CD8-positive, alpha-beta memory T cell (primary cell): ENCODE measurements at regions of chr3 and their contacts with region 1.

Region 1: DNA sequence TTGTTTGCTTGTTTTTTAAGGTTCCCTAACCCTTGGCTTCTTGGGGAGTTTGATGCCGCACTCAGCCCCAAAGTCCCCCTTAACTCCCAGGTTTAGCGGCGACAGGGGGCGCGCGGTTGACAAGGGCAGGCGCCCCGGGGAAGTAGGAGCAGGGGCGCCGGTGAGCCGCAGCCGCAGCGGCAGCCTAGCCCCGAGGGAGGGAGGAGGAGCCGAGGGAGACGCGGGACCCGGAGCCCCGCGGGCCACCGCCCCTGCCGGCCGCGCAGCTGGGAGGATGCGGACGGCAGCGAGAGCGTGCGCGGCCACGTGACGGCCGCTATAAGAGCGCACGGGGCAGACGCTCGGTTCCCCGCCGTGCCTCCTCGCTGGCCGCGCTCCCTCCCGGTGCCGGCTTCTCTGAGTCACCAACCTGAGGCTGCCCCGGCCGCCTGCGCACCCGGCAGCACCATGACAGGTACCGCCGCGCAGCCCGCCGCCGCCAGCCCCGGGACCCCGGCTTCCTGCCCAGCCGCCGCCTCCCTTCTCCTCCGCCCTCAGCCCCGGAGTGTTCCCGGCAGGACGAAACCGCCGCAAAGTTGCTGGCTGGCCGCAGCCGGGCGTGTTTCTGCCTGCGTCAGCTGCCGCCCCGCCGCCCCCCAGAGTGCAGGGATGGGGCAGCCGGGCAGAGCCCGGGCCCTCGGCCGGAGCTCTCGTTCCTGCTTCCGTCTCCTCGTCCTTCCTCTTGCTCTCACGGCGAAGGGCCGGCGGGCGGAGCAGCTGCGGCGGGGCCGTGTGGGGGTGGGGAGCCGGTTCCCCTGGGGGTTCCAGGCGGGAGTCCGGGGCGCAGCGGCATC is at the start of gene GYG1:
- DNase-seq: peak; percentile 73 to 88 (median 78)
- H3K4me3 ChIP-seq: peak within 1 kb of the TSS; percentile 53
- H3K4me3 Mint-ChIP-seq: peak within 1 kb of the TSS; percentile 82 to 90 (median 86)
- H3K27ac ChIP-seq: peak within 1 kb of the TSS; percentile 68
- H3K27ac Mint-ChIP-seq: peak within 1 kb of the TSS; percentile 87 to 97 (median 93)
- H3K4me1 ChIP-seq: peaks cover 26% of the 10 kb centered on the region
- H3K4me1 Mint-ChIP-seq: peaks cover 43 to 52% (median 48%) of the 10 kb centered on the region in 3 donors
- H3K27me3 ChIP-seq: no peaks in the 10 kb centered on the region
- H3K27me3 Mint-ChIP-seq: no peaks in the 10 kb centered on the region
- total RNA-seq, gene GYG1: 31.9 to 35.0 TPM

Region 2: GRCh38 chr3:148981273-148981672 is 10.1 kb before region 1 on chr3:
- CTCF ChIA-PET with region 1: interaction called, 14 read pairs
- POLR2A ChIA-PET with region 1: interaction called, 3 read pairs
- DNase-seq: no peak
- H3K4me3 ChIP-seq: no peak overlapping the region
- H3K4me3 Mint-ChIP-seq: no peak overlapping the region
- H3K27ac ChIP-seq: no peak overlapping the region
- H3K27ac Mint-ChIP-seq: no peak overlapping the region
- H3K4me1 ChIP-seq: no peaks in the 10 kb centered on the region
- H3K4me1 Mint-ChIP-seq: no peaks in the 10 kb centered on the region
- H3K27me3 ChIP-seq: no peaks in the 10 kb centered on the region
- H3K27me3 Mint-ChIP-seq: peaks cover 10 to 25% of the 10 kb centered on the region in 2 donors